ENCODE measurements at regions of chr3 and their contacts with region 1.

Region 1: GRCh38 chr3:170089862-170090600 is 52.2 kb downstream of the GPR160 start:
- DNase-seq: no peak
- ATAC-seq: no peak
- H3K4me3 ChIP-seq: no peak overlapping the region
- H3K27ac ChIP-seq: no peak overlapping the region
- H3K4me1 ChIP-seq: no peaks in the 10 kb centered on the region
- H3K27me3 ChIP-seq: no peaks in the 10 kb centered on the region
- CTCF ChIP-seq: no peak
- EP300 ChIP-seq: no peak
- POLR2A ChIP-seq: no peak
- RAD21 ChIP-seq: no peak

Region 2: GRCh38 chr3:169998568-169999131 is 91.4 kb before region 1 on chr3:
- CTCF ChIA-PET with region 1: no interaction called
- POLR2A ChIA-PET with region 1: no interaction called
- RAD21 ChIA-PET with region 1: no interaction called
- SMC1A ChIA-PET with region 1: no interaction called
- in situ Hi-C with region 1: no loop called
- intact Hi-C with region 1: no loop called
- DNase-seq: no peak
- ATAC-seq: peak; percentile 42
- H3K4me3 ChIP-seq: no peak overlapping the region
- H3K27ac ChIP-seq: peak overlapping the region; percentile 85
- H3K4me1 ChIP-seq: peaks cover 21% of the 10 kb centered on the region
- H3K27me3 ChIP-seq: no peaks in the 10 kb centered on the region
- CTCF ChIP-seq: no peak
- EP300 ChIP-seq: no peak
- POLR2A ChIP-seq: no peak
- RAD21 ChIP-seq: no peak

Region 3: DNA sequence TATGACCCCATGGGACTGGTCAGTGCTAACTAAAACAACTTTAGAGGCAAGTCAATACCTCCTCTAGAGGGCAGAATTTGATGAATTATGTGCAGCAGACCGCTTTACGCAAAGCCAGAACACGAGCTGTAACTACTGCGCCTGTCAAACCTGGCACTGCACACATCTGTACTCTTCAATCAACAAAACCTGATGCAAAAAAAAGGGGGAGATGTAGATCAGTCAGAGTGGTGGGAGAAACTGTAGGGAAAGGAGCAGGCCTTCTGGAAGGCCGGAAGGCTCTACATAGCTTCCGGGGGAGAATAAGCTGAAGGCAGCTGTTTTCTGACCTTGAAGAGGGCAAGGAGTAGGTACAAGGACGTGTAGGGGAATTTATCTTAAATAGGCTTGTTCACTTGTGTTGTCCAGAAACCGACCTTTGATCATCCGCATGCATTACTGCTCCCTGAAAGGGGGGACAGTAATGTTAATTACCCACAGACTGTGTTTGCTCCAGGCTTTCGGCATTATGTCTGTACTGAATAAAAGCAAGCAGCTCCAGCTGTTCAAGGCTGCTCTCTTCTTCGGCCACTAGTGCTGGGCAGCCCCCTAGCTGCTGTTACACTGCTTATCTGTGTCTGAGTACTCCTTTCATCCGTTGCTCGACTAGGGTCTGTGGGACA is 11.3 kb before region 1 on chr3:
- CTCF ChIA-PET with region 1: interaction called, 18 read pairs
- POLR2A ChIA-PET with region 1: interaction called, 4 read pairs
- RAD21 ChIA-PET with region 1: no interaction called
- SMC1A ChIA-PET with region 1: interaction called, 6 read pairs
- in situ Hi-C with region 1: no loop called
- intact Hi-C with region 1: no loop called
- DNase-seq: no peak
- ATAC-seq: peak; percentile 55; the same call in 2 of the 3 replicates
- H3K4me3 ChIP-seq: no peak overlapping the region
- H3K27ac ChIP-seq: no peak overlapping the region
- H3K4me1 ChIP-seq: no peaks in the 10 kb centered on the region
- H3K27me3 ChIP-seq: no peaks in the 10 kb centered on the region
- CTCF ChIP-seq: peak in 2 of 3 experiments; percentile 14 to 15; a peak in 1 of 6 replicates
- EP300 ChIP-seq: no peak
- POLR2A ChIP-seq: peak; percentile 24; the same call in 1 of the 2 replicates
- RAD21 ChIP-seq: 0 out of 2 replicates have a peak, but pooled peaks have one; percentile 9

Region 4: GRCh38 chr3:170102431-170102830 is 12.4 kb after region 1 on chr3:
- CTCF ChIA-PET with region 1: interaction called, 6 read pairs
- POLR2A ChIA-PET with region 1: interaction called, 3 read pairs
- RAD21 ChIA-PET with region 1: no interaction called
- SMC1A ChIA-PET with region 1: interaction called, 11 read pairs
- in situ Hi-C with region 1: no loop called
- intact Hi-C with region 1: no loop called
- DNase-seq: no peak
- ATAC-seq: no peak
- H3K4me3 ChIP-seq: no peak overlapping the region
- H3K27ac ChIP-seq: no peak overlapping the region
- H3K4me1 ChIP-seq: no peaks in the 10 kb centered on the region
- H3K27me3 ChIP-seq: no peaks in the 10 kb centered on the region
- CTCF ChIP-seq: no peak
- EP300 ChIP-seq: no peak
- POLR2A ChIP-seq: no peak
- RAD21 ChIP-seq: no peak